ENCODE measurements at regions of chr14 and their contacts with region 1.

Region 1: GRCh38 chr14:51219473-51220448 is 20.3 kb upstream of the TMX1 start:
- DNase-seq: peak in 1 of 4 donors; percentile 52
- ATAC-seq: peak; percentile 24
- H3K4me3 ChIP-seq: no peak overlapping the region
- H3K27ac ChIP-seq: no peak overlapping the region
- H3K4me1 ChIP-seq: peaks cover 0 to 5% of the 10 kb centered on the region in 2 donors
- H3K27me3 ChIP-seq: no peaks in the 10 kb centered on the region
- CTCF ChIP-seq: peak in 1 of 2 donors; percentile 47

Region 2: GRCh38 chr14:50823051-50823761 is 396.6 kb before region 1 on chr14:
- intact Hi-C with region 1: no loop called
- DNase-seq: peak in 1 of 4 donors; percentile 15
- ATAC-seq: peak; percentile 11
- H3K4me3 ChIP-seq: no peak overlapping the region
- H3K27ac ChIP-seq: peak overlapping the region in 1 of 2 donors; percentile 86
- H3K4me1 ChIP-seq: peaks cover 0 to 60% of the 10 kb centered on the region in 2 donors
- H3K27me3 ChIP-seq: no peaks in the 10 kb centered on the region
- CTCF ChIP-seq: no peak

Region 3: GRCh38 chr14:50954811-50955372 is 264.9 kb before region 1 on chr14:
- intact Hi-C with region 1: loop called in 1 of 2 experiments (anchors 10 kb)
- DNase-seq: peak in 1 of 4 donors; percentile 52
- ATAC-seq: peak; percentile 88
- H3K4me3 ChIP-seq: no peak overlapping the region
- H3K27ac ChIP-seq: peak overlapping the region in 1 of 2 donors; percentile 85
- H3K4me1 ChIP-seq: peaks cover 0 to 28% of the 10 kb centered on the region in 2 donors
- H3K27me3 ChIP-seq: no peaks in the 10 kb centered on the region
- CTCF ChIP-seq: peak; percentile 56 to 60